ENCODE measurements at regions of chr22 and their contacts with region 1.

Region 1: GRCh38 chr22:28051787-28052356 is 132.8 kb upstream of the PITPNB start:
- DNase-seq: no peak
- H3K4me3 ChIP-seq: no peak overlapping the region
- CTCF ChIP-seq: peak; percentile 87

Region 2: GRCh38 chr22:28034760-28035401 is 17.0 kb before region 1 on chr22:
- CTCF ChIA-PET with region 1: interaction called, 10 read pairs
- POLR2A ChIA-PET with region 1: no interaction called
- DNase-seq: no peak
- H3K4me3 ChIP-seq: no peak overlapping the region
- CTCF ChIP-seq: no peak

Region 3: DNA sequence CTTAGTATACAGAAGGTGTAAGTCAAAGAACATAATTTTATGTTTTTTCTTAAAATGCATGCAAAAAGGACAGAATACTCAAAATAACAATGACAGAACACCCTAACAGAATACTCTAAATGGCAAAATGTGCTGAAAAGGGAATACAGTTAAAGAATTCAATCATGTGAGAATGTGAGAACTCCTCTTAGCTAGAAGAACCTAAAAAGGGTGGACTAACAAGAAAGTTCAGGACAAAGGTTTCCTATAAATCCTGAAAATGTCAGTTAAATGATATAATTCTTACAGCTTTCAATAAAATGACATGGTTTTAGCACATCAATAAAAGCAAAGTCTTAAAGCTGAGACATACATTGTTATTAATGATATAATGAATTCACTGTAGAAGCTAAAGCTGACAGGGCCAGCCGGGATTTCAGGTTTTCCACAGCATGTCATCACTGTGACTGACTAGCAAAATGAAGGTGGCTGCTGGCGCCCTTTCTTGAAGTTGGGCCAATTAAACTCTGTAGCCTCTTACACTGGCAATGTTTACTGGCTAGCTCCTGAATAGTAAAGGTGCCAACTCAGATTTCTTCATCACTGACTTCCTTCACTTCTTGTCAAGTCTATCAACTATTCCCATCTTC is 383.4 kb after region 1 on chr22:
- CTCF ChIA-PET with region 1: interaction called, 68 read pairs
- POLR2A ChIA-PET with region 1: no interaction called
- DNase-seq: no peak
- H3K4me3 ChIP-seq: no peak overlapping the region
- CTCF ChIP-seq: no peak

Region 4: GRCh38 chr22:28589102-28589750 is 537.4 kb after region 1 on chr22:
- CTCF ChIA-PET with region 1: interaction called, 89 read pairs
- POLR2A ChIA-PET with region 1: no interaction called
- DNase-seq: no peak
- H3K4me3 ChIP-seq: no peak overlapping the region
- CTCF ChIP-seq: no peak

Measured in AG04449 (cell line).